Heart left ventricle (tissue), 16 donors: ENCODE measurements at regions of chr12 and their contacts with region 1.

Region 1: DNA sequence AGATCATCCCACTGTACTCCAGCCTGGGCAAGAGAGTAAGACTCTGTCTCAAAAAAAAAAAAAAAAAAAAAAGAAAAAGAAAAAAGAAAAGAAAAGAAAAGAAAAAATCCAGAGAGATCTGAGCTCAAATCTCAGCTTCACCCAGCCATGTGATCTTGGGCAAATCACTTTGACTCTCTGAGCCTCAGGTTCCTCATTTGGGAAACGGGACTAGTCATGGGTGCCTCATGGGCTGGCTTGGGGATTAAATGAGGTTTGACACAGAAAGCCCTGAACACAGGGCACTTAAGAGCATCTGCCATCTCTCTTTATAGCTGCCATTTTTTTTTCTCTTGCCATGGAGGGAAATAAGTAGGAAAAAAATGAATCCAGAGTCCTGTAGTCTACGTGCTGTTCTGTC is 86.2 kb upstream of the MYL2 start:
- DNase-seq: no peak
- ATAC-seq: no peak
- H3K4me3 ChIP-seq: no peak overlapping the region
- H3K27ac ChIP-seq: no peak overlapping the region
- H3K4me1 ChIP-seq: no peaks in the 10 kb centered on the region
- H3K27me3 ChIP-seq: peaks cover 0 to 12% (median 0%) of the 10 kb centered on the region in 9 donors
- CTCF ChIP-seq: no peak
- POLR2A ChIP-seq: no peak

Region 2: GRCh38 chr12:110983806-110984205 is 22.8 kb before region 1 on chr12:
- intact Hi-C with region 1: loop called in 1 of 10 experiments (anchors 1 kb)
- DNase-seq: no peak
- ATAC-seq: no peak
- H3K4me3 ChIP-seq: no peak overlapping the region
- H3K27ac ChIP-seq: no peak overlapping the region
- H3K4me1 ChIP-seq: no peaks in the 10 kb centered on the region
- H3K27me3 ChIP-seq: peaks cover 0 to 4% (median 0%) of the 10 kb centered on the region in 9 donors
- CTCF ChIP-seq: no peak
- POLR2A ChIP-seq: no peak